ENCODE measurements at regions of chr15 and their contacts with region 1.

Region 1: GRCh38 chr15:63600616-63601025 is 3.4 kb downstream of the FBXL22 start:
- DNase-seq: peak; percentile 90
- ATAC-seq: peak; percentile 81
- H3K4me3 Mint-ChIP-seq: peak overlapping the region; percentile 88
- H3K27ac Mint-ChIP-seq: peak overlapping the region; percentile 90
- H3K4me1 Mint-ChIP-seq: peaks cover 63% of the 10 kb centered on the region
- H3K27me3 Mint-ChIP-seq: peaks cover 3% of the 10 kb centered on the region

Region 2: GRCh38 chr15:63461230-63461985 is 139.2 kb before region 1 on chr15:
- CTCF ChIA-PET with region 1: interaction called, 23 read pairs
- POLR2A ChIA-PET with region 1: no interaction called
- DNase-seq: no peak
- ATAC-seq: no peak
- H3K4me3 Mint-ChIP-seq: no peak overlapping the region
- H3K27ac Mint-ChIP-seq: no peak overlapping the region
- H3K4me1 Mint-ChIP-seq: peaks cover 2% of the 10 kb centered on the region
- H3K27me3 Mint-ChIP-seq: peaks cover 7% of the 10 kb centered on the region

Region 3: GRCh38 chr15:63487076-63487757 is 113.4 kb before region 1 on chr15:
- CTCF ChIA-PET with region 1: interaction called, 11 read pairs
- POLR2A ChIA-PET with region 1: interaction called, 4 read pairs
- DNase-seq: peak; percentile 92
- ATAC-seq: peak; percentile 96
- H3K4me3 Mint-ChIP-seq: no peak overlapping the region
- H3K27ac Mint-ChIP-seq: peak overlapping the region; percentile 62
- H3K4me1 Mint-ChIP-seq: peaks cover 53% of the 10 kb centered on the region
- H3K27me3 Mint-ChIP-seq: no peaks in the 10 kb centered on the region

Region 4: GRCh38 chr15:63553388-63553791 is 47.2 kb before region 1 on chr15:
- CTCF ChIA-PET with region 1: interaction called, 10 read pairs
- POLR2A ChIA-PET with region 1: no interaction called
- DNase-seq: no peak
- ATAC-seq: no peak
- H3K4me3 Mint-ChIP-seq: no peak overlapping the region
- H3K27ac Mint-ChIP-seq: no peak overlapping the region
- H3K4me1 Mint-ChIP-seq: peaks cover 23% of the 10 kb centered on the region
- H3K27me3 Mint-ChIP-seq: no peaks in the 10 kb centered on the region

Region 5: DNA sequence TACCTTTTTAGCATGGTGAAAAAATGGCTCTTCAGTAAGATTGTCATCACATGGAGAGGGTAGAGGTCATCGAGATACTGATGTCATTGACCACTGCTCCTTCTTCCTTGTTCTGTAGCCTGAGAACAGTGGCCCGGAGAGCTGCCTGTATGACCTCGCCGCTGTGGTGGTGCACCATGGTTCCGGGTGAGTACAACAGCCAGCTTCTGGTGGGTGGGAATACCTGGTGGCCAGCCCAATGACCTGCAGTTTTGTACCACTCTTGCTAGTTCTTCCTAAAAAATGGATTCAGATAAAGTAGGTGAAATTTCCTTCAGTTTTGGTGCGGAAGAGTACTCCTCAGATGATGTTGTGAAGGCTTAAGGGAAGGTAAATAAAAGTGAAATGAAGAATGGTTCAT is 11.8 kb before region 1 on chr15:
- CTCF ChIA-PET with region 1: interaction called, 10 read pairs
- POLR2A ChIA-PET with region 1: interaction called, 3 read pairs
- DNase-seq: no peak
- ATAC-seq: no peak
- H3K4me3 Mint-ChIP-seq: no peak overlapping the region
- H3K27ac Mint-ChIP-seq: no peak overlapping the region
- H3K4me1 Mint-ChIP-seq: peaks cover 26% of the 10 kb centered on the region
- H3K27me3 Mint-ChIP-seq: no peaks in the 10 kb centered on the region

Region 6: DNA sequence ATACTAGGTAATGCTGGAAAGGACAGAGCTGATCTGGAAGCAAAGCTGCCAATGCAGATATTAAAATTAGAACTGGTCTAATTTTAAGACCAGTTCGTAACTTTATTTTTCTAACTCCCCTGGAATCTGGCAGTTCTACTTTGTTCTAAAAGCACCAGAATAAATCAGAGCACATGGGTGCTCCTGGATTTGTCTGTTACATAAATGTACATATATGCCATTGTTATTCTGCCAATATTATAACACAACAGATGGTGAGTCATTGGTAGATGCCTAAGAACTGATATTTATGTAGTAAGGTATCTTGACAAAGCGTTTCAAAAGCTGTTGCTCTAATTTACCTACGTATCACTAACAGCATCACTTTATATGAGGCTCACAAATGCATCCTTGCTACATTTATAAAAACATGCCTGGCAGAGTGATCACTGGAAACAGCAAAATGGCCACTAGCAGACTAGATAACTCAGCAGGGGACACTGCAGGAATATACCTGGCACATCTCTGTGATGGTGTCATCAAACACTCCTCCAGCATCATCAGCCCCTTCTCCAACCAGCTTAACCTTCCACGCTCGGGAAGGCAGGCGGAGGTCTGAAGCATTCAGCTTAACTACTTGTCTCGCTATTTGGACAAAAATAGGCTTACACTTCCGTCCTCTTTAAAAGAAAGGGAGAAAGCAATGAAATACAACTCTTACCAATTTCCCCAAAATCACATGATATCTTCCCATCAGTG is 22.8 kb after region 1 on chr15:
- CTCF ChIA-PET with region 1: no interaction called
- POLR2A ChIA-PET with region 1: no interaction called
- DNase-seq: no peak
- ATAC-seq: no peak
- H3K4me3 Mint-ChIP-seq: no peak overlapping the region
- H3K27ac Mint-ChIP-seq: no peak overlapping the region
- H3K4me1 Mint-ChIP-seq: peaks cover 6% of the 10 kb centered on the region
- H3K27me3 Mint-ChIP-seq: no peaks in the 10 kb centered on the region

Region 7: DNA sequence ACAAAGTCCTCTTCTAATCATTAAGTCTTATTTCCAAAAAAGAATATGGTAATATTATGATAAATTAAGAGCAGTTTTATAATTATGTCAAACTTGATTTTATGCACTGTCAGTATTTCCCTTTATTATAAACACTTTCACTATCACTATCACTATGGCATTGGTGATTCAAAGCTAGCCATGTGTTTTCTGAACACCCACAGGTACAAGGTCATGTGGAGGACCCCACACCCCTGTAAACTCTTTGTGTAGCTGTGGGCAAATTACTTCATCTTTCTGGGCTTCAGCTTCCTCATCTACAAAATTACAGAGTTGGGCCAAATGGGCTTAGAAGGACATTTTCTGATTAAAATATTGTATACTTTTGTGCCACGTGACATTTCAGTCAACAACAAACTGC is 38.2 kb after region 1 on chr15:
- CTCF ChIA-PET with region 1: no interaction called
- POLR2A ChIA-PET with region 1: no interaction called
- DNase-seq: no peak
- ATAC-seq: peak; percentile 51
- H3K4me3 Mint-ChIP-seq: no peak overlapping the region
- H3K27ac Mint-ChIP-seq: no peak overlapping the region
- H3K4me1 Mint-ChIP-seq: peaks cover 15% of the 10 kb centered on the region
- H3K27me3 Mint-ChIP-seq: no peaks in the 10 kb centered on the region

Region 8: GRCh38 chr15:63933522-63933921 is 332.9 kb after region 1 on chr15:
- CTCF ChIA-PET with region 1: no interaction called
- POLR2A ChIA-PET with region 1: no interaction called
- DNase-seq: no peak
- ATAC-seq: no peak
- H3K4me3 Mint-ChIP-seq: no peak overlapping the region
- H3K27ac Mint-ChIP-seq: no peak overlapping the region
- H3K4me1 Mint-ChIP-seq: peaks cover 13% of the 10 kb centered on the region
- H3K27me3 Mint-ChIP-seq: peaks cover 2% of the 10 kb centered on the region

Region 9: GRCh38 chr15:64067564-64068030 is 467.0 kb after region 1 on chr15:
- CTCF ChIA-PET with region 1: interaction called, 132 read pairs
- POLR2A ChIA-PET with region 1: interaction called, 3 read pairs
- DNase-seq: peak; percentile 79
- ATAC-seq: peak; percentile 89
- H3K4me3 Mint-ChIP-seq: no peak overlapping the region
- H3K27ac Mint-ChIP-seq: peak overlapping the region; percentile 71
- H3K4me1 Mint-ChIP-seq: peaks cover 26% of the 10 kb centered on the region
- H3K27me3 Mint-ChIP-seq: no peaks in the 10 kb centered on the region

Measured in activated CD8-positive, alpha-beta T cell treated with anti-CD3 and anti-CD28 coated beads, Interleukin-2, amount 10 ng/mL, durations not matched to agents 7 days and 5 days (primary cell).